ENCODE measurements at regions of chr7 and their contacts with region 1.

Region 1: DNA sequence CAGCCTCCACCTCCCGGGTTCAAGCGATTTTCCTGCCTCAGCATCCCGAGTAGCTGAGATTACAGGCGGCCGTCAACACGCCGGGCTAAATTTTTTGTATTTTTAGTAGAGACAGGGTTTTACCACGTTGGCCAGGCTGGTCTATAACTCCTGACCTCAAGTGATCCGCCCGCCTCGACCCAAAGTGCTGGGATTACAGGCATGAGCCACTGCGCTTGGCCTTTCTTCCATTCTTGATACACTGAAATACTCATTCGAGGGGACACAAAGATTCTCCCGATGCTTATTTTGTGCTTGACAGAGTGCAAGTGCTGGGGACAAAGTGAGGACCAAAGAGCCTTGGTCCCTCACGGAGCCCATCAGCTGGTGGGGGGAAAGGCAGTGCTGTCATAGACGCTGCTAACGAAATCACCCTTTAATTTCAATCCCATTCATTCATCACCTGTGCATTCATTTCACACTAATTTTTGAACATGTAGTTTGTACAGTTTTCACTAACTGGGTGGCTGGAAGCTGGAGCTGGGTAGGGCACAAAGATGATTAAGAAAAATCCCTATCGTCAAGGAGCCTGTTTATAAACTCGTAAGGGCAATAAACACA is 621 bp upstream of the FAM133B start:
- DNase-seq: no peak
- H3K4me3 Mint-ChIP-seq: peak overlapping the region; percentile 99
- H3K27ac Mint-ChIP-seq: peak overlapping the region; percentile 98
- H3K4me1 Mint-ChIP-seq: peaks cover 20% of the 10 kb centered on the region
- H3K27me3 Mint-ChIP-seq: no peaks in the 10 kb centered on the region
- CTCF ChIP-seq: no peak

Region 2: DNA sequence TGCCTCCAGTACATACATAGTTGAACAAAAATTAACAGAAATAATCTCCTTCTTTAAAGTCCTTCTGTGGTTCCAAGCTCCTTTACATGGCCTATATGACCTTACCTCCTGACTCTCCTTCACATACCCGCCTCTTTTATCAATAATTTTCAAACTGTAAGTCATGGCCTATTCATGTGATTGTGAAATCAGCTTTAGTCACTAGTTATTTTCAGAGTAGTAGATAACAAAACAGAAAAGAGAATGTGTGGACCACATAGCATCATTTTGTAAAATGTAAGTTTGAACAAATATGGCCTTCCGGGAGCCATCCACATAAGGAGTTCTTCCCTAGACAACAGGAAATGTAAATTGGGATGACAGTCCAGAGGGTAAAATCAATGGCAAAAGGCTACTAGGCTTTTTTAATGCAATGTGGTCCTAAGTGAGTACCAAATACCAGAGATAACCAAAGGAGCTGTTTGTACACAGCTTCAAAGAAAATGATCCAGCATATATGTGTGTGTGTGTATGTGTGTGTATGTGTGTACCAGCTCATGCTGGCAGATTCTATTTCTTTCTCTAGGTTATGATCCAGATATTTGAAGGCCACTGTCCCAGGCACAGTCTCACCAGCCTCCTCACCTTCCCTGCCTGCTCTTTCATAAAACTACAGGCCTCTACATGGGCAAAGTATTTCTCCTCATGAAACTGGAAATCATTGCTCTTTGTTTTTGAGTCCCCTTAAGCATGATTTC is 11.7 kb after region 1 on chr7:
- CTCF ChIA-PET with region 1: interaction called, 20 read pairs
- POLR2A ChIA-PET with region 1: no interaction called
- intact Hi-C with region 1: no loop called
- DNase-seq: no peak
- H3K4me3 Mint-ChIP-seq: no peak overlapping the region
- H3K27ac Mint-ChIP-seq: no peak overlapping the region
- H3K4me1 Mint-ChIP-seq: no peaks in the 10 kb centered on the region
- H3K27me3 Mint-ChIP-seq: no peaks in the 10 kb centered on the region
- CTCF ChIP-seq: no peak

Region 3: GRCh38 chr7:92609921-92610518 is 19.2 kb after region 1 on chr7:
- CTCF ChIA-PET with region 1: interaction called, 20 read pairs
- POLR2A ChIA-PET with region 1: interaction called, 10 read pairs
- intact Hi-C with region 1: no loop called
- DNase-seq: peak; percentile 36
- H3K4me3 Mint-ChIP-seq: no peak overlapping the region
- H3K27ac Mint-ChIP-seq: no peak overlapping the region
- H3K4me1 Mint-ChIP-seq: no peaks in the 10 kb centered on the region
- H3K27me3 Mint-ChIP-seq: no peaks in the 10 kb centered on the region
- CTCF ChIP-seq: peak; percentile 38

Measured in MCF 10A (cell line).